HepG2 (cell line): ENCODE measurements at regions of chr1 and their contacts with region 1.

Region 1: GRCh38 chr1:32179443-32180185 is at the start of gene TXLNA:
- DNase-seq: peak; percentile 86
- ATAC-seq: peak; percentile 85
- H3K4me3 ChIP-seq: peak within 1 kb of the TSS; percentile 58 to 76 (median 61)
- H3K27ac ChIP-seq: peak within 1 kb of the TSS; percentile 87
- H3K4me1 ChIP-seq: peaks cover 64% of the 10 kb centered on the region
- H3K27me3 ChIP-seq: no peaks in the 10 kb centered on the region
- CTCF ChIP-seq: no peak
- EP300 ChIP-seq: no peak
- POLR2A ChIP-seq: peak; percentile 74 to 95
- RAD21 ChIP-seq: 0 out of 2 replicates have a peak, but pooled peaks have one; percentile 14
- total RNA-seq, gene TXLNA: 67.8 and 70.7 TPM in 2 replicates

Region 2: GRCh38 chr1:32072622-32073298 is 106.9 kb before region 1 on chr1 and contains the start of gene TMEM39B:
- CTCF ChIA-PET with region 1: no interaction called
- POLR2A ChIA-PET with region 1: interaction called, 14 read pairs
- in situ Hi-C with region 1: no loop called
- intact Hi-C with region 1: loop called (anchors 1 kb)
- DNase-seq: peak; percentile 85
- ATAC-seq: peak; percentile 86
- H3K4me3 ChIP-seq: peak within 1 kb of the TSS; percentile 81 to 91 (median 81)
- H3K27ac ChIP-seq: peak within 1 kb of the TSS; percentile 61
- H3K4me1 ChIP-seq: peaks cover 46% of the 10 kb centered on the region
- H3K27me3 ChIP-seq: no peaks in the 10 kb centered on the region; a peak in 1 of 5 replicates
- CTCF ChIP-seq: no peak; the same call in 1 of the 2 replicates
- EP300 ChIP-seq: no peak
- POLR2A ChIP-seq: peak; percentile 63 to 67
- RAD21 ChIP-seq: 0 out of 2 replicates have a peak, but pooled peaks have one; percentile 30
- total RNA-seq, gene TMEM39B: 3.1 and 4.9 TPM in 2 replicates

Region 3: GRCh38 chr1:32107742-32108661 is 71.6 kb before region 1 on chr1 and contains the start of gene KPNA6:
- CTCF ChIA-PET with region 1: interaction called, 3 read pairs
- POLR2A ChIA-PET with region 1: interaction called, 19 read pairs
- in situ Hi-C with region 1: no loop called
- intact Hi-C with region 1: no loop called
- DNase-seq: peak; percentile 92
- ATAC-seq: peak; percentile 83
- H3K4me3 ChIP-seq: peak within 1 kb of the TSS; percentile 82 to 98 (median 92)
- H3K27ac ChIP-seq: peak within 1 kb of the TSS; percentile 93
- H3K4me1 ChIP-seq: peaks cover 53% of the 10 kb centered on the region
- H3K27me3 ChIP-seq: no peaks in the 10 kb centered on the region; a peak in 1 of 5 replicates
- CTCF ChIP-seq: no peak
- EP300 ChIP-seq: peak in 1 of 2 experiments; percentile 24; a peak in 1 of 4 replicates
- POLR2A ChIP-seq: peak; percentile 66 to 67
- RAD21 ChIP-seq: no peak
- total RNA-seq, gene KPNA6: 47.5 and 111 TPM in 2 replicates

Region 4: GRCh38 chr1:32200226-32201010 is 20.8 kb after region 1 on chr1 and contains the start of gene CCDC28B:
- CTCF ChIA-PET with region 1: no interaction called
- POLR2A ChIA-PET with region 1: interaction called, 38 read pairs
- in situ Hi-C with region 1: no loop called
- intact Hi-C with region 1: no loop called
- DNase-seq: no peak
- ATAC-seq: peak; percentile 42
- H3K4me3 ChIP-seq: peak within 1 kb of the TSS; percentile 64 to 72 (median 65)
- H3K27ac ChIP-seq: no peak within 1 kb of the TSS
- H3K4me1 ChIP-seq: peaks cover 20% of the 10 kb centered on the region
- H3K27me3 ChIP-seq: no peaks in the 10 kb centered on the region
- CTCF ChIP-seq: no peak
- EP300 ChIP-seq: no peak
- POLR2A ChIP-seq: no peak
- RAD21 ChIP-seq: no peak
- total RNA-seq, gene CCDC28B: 2.8 and 3.5 TPM in 2 replicates

Region 5: DNA sequence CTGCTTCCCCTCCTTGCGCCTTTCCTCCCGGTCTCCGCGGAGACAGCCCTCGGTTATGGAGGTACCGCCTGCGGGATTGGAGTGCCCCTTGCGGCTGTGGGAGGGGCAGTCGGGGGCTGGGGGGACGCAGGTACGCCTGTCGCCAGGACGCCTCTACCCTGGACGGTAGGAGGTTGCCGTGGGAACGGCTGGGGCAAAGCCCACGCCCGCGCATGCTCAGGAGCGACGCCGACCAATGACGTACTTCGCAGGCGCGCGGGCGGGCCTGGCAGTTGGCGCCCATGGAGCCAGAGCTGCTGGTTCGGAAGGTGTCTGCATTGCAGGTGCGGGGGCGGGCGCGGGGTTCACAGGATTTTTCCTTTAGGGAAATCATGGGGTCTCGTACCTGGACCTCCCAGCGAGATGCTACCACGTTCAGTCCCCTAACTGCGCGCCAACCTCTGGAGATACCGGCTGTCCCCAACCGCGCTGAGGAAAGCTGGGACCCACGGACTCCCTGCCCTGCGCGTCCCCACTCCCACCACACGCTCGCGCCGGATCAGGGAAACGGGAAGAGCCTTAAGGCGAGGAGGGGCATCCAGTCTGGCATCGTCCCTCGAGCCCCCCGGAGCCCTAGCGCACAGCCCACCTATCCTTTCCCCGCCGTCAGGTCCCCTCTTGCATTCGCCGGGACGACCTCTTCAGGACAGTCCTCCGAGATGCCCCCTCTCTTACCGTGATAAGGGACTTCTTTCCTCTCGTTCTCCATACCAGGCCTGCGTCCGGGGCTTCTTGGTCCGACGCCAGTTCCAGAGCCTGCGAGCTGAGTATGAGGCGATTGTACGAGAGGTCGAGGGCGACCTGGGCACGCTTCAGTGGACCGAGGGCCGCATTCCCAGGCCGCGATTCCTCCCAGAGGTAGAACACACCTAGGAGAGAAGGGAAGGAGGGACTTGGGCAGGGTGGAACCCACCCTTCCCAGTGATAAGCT is 26.1 kb after region 1 on chr1 and contains the start of gene IQCC:
- CTCF ChIA-PET with region 1: no interaction called
- POLR2A ChIA-PET with region 1: interaction called, 38 read pairs
- in situ Hi-C with region 1: no loop called
- intact Hi-C with region 1: no loop called
- DNase-seq: peak; percentile 78
- ATAC-seq: peak; percentile 74
- H3K4me3 ChIP-seq: peak within 1 kb of the TSS; percentile 53 to 93 (median 86)
- H3K27ac ChIP-seq: peak within 1 kb of the TSS; percentile 39
- H3K4me1 ChIP-seq: peaks cover 19% of the 10 kb centered on the region
- H3K27me3 ChIP-seq: no peaks in the 10 kb centered on the region
- CTCF ChIP-seq: peak; percentile 60
- EP300 ChIP-seq: no peak
- POLR2A ChIP-seq: peak; percentile 64 to 78
- RAD21 ChIP-seq: no peak; the same call in 1 of the 2 replicates
- total RNA-seq, gene IQCC: 2.3 and 3.0 TPM in 2 replicates